AG04450 (cell line): ENCODE measurements at regions of chr3 and their contacts with region 1.

Region 1: GRCh38 chr3:187714404-187714979 is 12.1 kb upstream of the RTP2 start:
- DNase-seq: peak; percentile 37
- H3K4me3 ChIP-seq: no peak overlapping the region
- H3K27ac ChIP-seq: no peak overlapping the region
- H3K27me3 ChIP-seq: peaks cover 7% of the 10 kb centered on the region
- CTCF ChIP-seq: peak; percentile 98

Region 2: DNA sequence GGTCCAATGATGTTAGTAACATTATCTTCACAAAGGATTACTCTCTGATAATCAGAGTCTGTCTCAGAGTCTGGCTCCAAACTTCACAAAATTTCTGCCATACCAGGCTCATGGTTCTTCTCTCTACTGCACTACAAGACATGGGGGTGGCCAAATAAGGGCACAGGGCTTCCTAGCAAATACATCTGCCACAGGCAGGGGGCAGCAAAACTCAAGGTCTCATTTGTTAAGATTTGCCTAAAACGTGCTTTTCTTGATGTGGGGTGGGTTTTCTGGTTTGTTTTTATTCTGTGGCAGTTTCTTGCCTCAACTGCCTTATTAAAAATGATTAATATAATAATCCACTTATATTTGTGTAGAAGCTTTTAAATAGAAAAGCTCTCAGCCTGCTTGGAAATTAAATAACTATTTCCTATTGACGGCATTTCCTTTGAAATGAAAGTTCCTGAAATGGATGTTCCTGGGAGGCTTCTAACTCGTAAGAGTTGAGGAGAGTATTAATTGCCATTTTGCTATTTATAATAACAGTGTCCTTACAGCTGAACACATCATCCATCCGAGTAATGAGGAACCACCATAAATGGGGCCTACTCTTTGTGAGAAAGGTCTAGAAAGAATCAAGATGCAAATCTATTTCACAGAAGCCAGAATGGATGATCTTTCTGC is 98.1 kb before region 1 on chr3:
- CTCF ChIA-PET with region 1: interaction called, 19 read pairs
- POLR2A ChIA-PET with region 1: no interaction called
- DNase-seq: peak; percentile 20
- H3K4me3 ChIP-seq: no peak overlapping the region
- H3K27ac ChIP-seq: no peak overlapping the region
- H3K27me3 ChIP-seq: peaks cover 13% of the 10 kb centered on the region
- CTCF ChIP-seq: peak; percentile 73